GM12878 (cell line): ENCODE measurements at regions of chrX and their contacts with region 1.

Region 1: DNA sequence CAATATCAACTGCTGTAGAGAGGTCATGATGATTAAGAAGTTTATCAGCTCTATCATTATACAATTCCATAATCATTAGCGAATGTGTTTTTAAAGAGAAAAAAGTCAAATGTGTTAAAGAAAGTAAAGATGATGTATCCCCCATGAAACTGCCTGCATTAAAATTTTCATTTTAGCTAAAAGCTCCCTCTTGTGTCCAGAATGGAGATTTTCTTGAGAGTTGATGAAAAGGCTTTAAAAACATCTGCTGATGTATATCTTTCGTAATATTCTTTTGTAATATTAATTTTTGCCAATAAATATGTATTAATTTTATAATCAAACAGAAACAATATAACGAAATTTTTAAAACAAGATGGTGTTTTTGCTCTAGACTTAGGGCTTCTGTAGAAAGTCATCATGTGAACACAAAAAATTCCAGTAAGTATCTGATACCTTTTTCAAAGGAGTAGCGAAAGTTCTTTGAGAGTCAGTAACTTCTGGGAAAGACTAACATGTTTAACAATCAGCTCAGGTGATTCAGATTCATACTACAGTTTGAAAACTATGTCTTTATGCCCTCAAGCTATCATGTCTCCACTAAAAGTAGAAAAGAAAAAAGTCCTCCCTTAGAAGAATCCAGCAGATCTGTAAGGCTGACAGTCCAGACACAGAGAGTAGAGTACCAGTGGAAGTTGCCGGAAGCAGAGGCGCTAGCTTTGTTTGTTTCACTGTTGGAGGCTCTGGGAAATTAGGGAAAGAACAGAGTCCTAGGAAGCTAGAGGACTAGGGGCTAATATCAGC is 52.2 kb upstream of the LHFPL1 start:
- DNase-seq: no peak
- ATAC-seq: peak; percentile 56
- H3K4me3 ChIP-seq: no peak overlapping the region
- H3K27ac ChIP-seq: no peak overlapping the region
- H3K4me1 ChIP-seq: no peaks in the 10 kb centered on the region; the same call in 1 of the 2 replicates
- H3K27me3 ChIP-seq: no peaks in the 10 kb centered on the region
- CTCF ChIP-seq: peak; percentile 19 to 33 (median 22); a peak in 3 of 6 replicates
- EP300 ChIP-seq: no peak
- POLR2A ChIP-seq: no peak
- RAD21 ChIP-seq: peak; percentile 71

Region 2: GRCh38 chrX:111869639-111870034 is 862.3 kb before region 1 on chrX:
- CTCF ChIA-PET with region 1: no interaction called
- POLR2A ChIA-PET with region 1: no interaction called
- RAD21 ChIA-PET with region 1: interaction called, 6 read pairs
- SMC1A ChIA-PET with region 1: interaction called, 3 read pairs
- in situ Hi-C with region 1: no loop called
- intact Hi-C with region 1: loop called (anchors 10 kb)
- DNase-seq: peak; percentile 19
- ATAC-seq: peak; percentile 92
- H3K4me3 ChIP-seq: no peak overlapping the region
- H3K27ac ChIP-seq: no peak overlapping the region
- H3K4me1 ChIP-seq: peaks cover 6% of the 10 kb centered on the region; the same call in 1 of the 2 replicates
- H3K27me3 ChIP-seq: no peaks in the 10 kb centered on the region
- CTCF ChIP-seq: peak; percentile 65 to 76 (median 70)
- EP300 ChIP-seq: no peak
- POLR2A ChIP-seq: no peak
- RAD21 ChIP-seq: peak; percentile 76

Region 3: GRCh38 chrX:112066813-112067212 is 665.2 kb before region 1 on chrX:
- CTCF ChIA-PET with region 1: no interaction called
- POLR2A ChIA-PET with region 1: no interaction called
- RAD21 ChIA-PET with region 1: no interaction called
- SMC1A ChIA-PET with region 1: no interaction called
- in situ Hi-C with region 1: no loop called
- intact Hi-C with region 1: loop called (anchors 10 kb)
- DNase-seq: peak; percentile 34
- ATAC-seq: peak; percentile 90
- H3K4me3 ChIP-seq: no peak overlapping the region
- H3K27ac ChIP-seq: no peak overlapping the region
- H3K4me1 ChIP-seq: no peaks in the 10 kb centered on the region
- H3K27me3 ChIP-seq: no peaks in the 10 kb centered on the region
- CTCF ChIP-seq: no peak
- EP300 ChIP-seq: no peak
- POLR2A ChIP-seq: no peak
- RAD21 ChIP-seq: no peak

Region 4: GRCh38 chrX:112147206-112147605 is 584.8 kb before region 1 on chrX:
- CTCF ChIA-PET with region 1: no interaction called
- POLR2A ChIA-PET with region 1: no interaction called
- RAD21 ChIA-PET with region 1: no interaction called
- SMC1A ChIA-PET with region 1: no interaction called
- in situ Hi-C with region 1: no loop called
- intact Hi-C with region 1: loop called (anchors 5 kb)
- DNase-seq: no peak
- ATAC-seq: peak; percentile 69
- H3K4me3 ChIP-seq: no peak overlapping the region
- H3K27ac ChIP-seq: no peak overlapping the region
- H3K4me1 ChIP-seq: no peaks in the 10 kb centered on the region
- H3K27me3 ChIP-seq: no peaks in the 10 kb centered on the region
- CTCF ChIP-seq: peak; percentile 47 to 65 (median 51); a peak in 5 of 6 replicates
- EP300 ChIP-seq: no peak
- POLR2A ChIP-seq: no peak
- RAD21 ChIP-seq: peak; percentile 49

Region 5: GRCh38 chrX:112377481-112377880 is 354.5 kb before region 1 on chrX:
- CTCF ChIA-PET with region 1: no interaction called
- POLR2A ChIA-PET with region 1: no interaction called
- RAD21 ChIA-PET with region 1: interaction called, 3 read pairs
- SMC1A ChIA-PET with region 1: no interaction called
- in situ Hi-C with region 1: no loop called
- intact Hi-C with region 1: loop called (anchors 10 kb)
- DNase-seq: no peak
- ATAC-seq: no peak
- H3K4me3 ChIP-seq: no peak overlapping the region
- H3K27ac ChIP-seq: no peak overlapping the region
- H3K4me1 ChIP-seq: no peaks in the 10 kb centered on the region
- H3K27me3 ChIP-seq: no peaks in the 10 kb centered on the region
- CTCF ChIP-seq: no peak
- EP300 ChIP-seq: no peak
- POLR2A ChIP-seq: no peak
- RAD21 ChIP-seq: no peak

Region 6: DNA sequence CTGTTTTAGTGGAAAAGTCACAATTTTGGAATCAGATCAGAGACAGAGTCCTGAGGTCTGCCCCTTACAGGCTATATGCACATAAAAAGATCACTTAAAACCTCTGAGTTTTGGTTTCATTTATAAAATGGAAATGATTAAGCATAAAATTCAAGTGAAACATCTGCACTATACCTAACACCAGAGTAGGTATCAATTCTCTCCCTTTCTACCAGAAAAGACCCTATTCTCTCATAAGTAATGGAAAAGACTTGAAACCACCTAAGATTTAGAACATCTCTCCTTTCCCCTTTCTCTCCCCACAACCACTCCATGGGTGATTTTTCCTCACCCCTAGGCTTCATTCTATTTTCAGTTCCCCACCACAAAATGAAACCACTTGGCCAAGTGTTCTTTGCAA is 53.2 kb before region 1 on chrX:
- CTCF ChIA-PET with region 1: interaction called, 3 read pairs
- POLR2A ChIA-PET with region 1: no interaction called
- RAD21 ChIA-PET with region 1: interaction called, 5 read pairs
- SMC1A ChIA-PET with region 1: interaction called, 3 read pairs
- in situ Hi-C with region 1: no loop called
- intact Hi-C with region 1: loop called (anchors 5 kb)
- DNase-seq: no peak
- ATAC-seq: peak; percentile 73
- H3K4me3 ChIP-seq: no peak overlapping the region; the same call in 1 of the 2 replicates
- H3K27ac ChIP-seq: peak overlapping the region; percentile 76
- H3K4me1 ChIP-seq: no peaks in the 10 kb centered on the region
- H3K27me3 ChIP-seq: no peaks in the 10 kb centered on the region
- CTCF ChIP-seq: no peak
- EP300 ChIP-seq: no peak
- POLR2A ChIP-seq: no peak
- RAD21 ChIP-seq: no peak

Region 7: GRCh38 chrX:112753116-112753515 is 21.1 kb after region 1 on chrX:
- CTCF ChIA-PET with region 1: no interaction called
- POLR2A ChIA-PET with region 1: no interaction called
- RAD21 ChIA-PET with region 1: no interaction called
- SMC1A ChIA-PET with region 1: no interaction called
- in situ Hi-C with region 1: no loop called
- intact Hi-C with region 1: no loop called
- DNase-seq: no peak
- ATAC-seq: no peak
- H3K4me3 ChIP-seq: no peak overlapping the region
- H3K27ac ChIP-seq: no peak overlapping the region
- H3K4me1 ChIP-seq: no peaks in the 10 kb centered on the region
- H3K27me3 ChIP-seq: no peaks in the 10 kb centered on the region
- CTCF ChIP-seq: no peak
- EP300 ChIP-seq: no peak
- POLR2A ChIP-seq: no peak
- RAD21 ChIP-seq: no peak

Region 8: DNA sequence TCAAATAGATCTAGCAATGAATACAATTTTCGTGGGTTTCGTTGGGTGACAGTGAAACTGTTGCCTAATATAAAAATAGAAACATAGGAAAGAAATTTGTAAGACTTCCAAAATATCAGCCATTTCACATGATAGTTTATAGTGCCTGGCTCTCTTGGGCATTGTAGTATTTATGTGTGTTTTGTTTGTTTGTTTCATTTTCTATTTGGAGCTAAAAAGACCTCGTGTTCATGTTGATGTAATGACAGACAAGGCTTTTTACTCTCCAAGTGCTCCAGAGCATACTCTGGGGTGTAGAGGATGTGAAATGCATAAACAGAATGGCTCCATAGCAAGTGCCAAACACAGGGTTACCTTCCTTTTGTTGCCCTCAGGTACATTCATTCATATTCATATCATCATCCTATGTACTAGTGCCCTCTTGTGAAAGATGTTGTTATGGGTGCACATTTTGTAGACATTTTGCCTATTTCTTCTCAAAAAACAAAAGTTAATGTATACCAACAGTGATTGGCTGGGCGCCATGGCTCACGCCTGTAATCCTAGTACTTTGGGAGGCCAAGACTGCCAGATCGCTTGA is 209.3 kb after region 1 on chrX:
- CTCF ChIA-PET with region 1: no interaction called
- POLR2A ChIA-PET with region 1: no interaction called
- RAD21 ChIA-PET with region 1: no interaction called
- SMC1A ChIA-PET with region 1: no interaction called
- in situ Hi-C with region 1: no loop called
- intact Hi-C with region 1: loop called (anchors 10 kb)
- DNase-seq: peak; percentile 32
- ATAC-seq: peak; percentile 85
- H3K4me3 ChIP-seq: no peak overlapping the region
- H3K27ac ChIP-seq: no peak overlapping the region
- H3K4me1 ChIP-seq: no peaks in the 10 kb centered on the region
- H3K27me3 ChIP-seq: no peaks in the 10 kb centered on the region
- CTCF ChIP-seq: peak in 2 of 3 experiments; percentile 33 to 36; a peak in 2 of 6 replicates
- EP300 ChIP-seq: no peak
- POLR2A ChIP-seq: no peak
- RAD21 ChIP-seq: peak; percentile 57